ENCODE measurements at regions of chr3 and their contacts with region 1.

Region 1: DNA sequence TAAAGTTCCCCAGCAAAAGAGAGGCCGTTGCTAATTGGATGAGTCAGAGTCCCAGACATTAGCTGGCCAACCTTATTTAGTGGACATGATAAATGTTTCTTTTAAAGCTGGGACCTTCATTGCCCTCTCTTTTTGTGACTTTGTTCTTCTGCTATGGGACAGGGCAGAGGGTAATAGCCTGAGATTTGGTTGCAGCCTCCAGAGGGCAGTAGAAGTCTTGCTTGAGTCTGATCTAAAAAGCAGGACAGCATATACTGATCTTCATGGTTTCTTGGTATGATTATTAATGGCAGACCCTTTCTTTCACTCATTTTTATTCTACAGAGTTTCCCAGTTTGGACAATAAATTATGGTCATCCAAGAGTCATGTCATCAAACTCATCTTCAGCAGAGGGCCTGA is 25.1 kb upstream of the ZKSCAN7 start:
- DNase-seq: no peak
- H3K4me3 ChIP-seq: no peak overlapping the region
- H3K4me3 Mint-ChIP-seq: no peak overlapping the region
- H3K27ac ChIP-seq: no peak overlapping the region
- H3K27ac Mint-ChIP-seq: no peak overlapping the region
- H3K4me1 ChIP-seq: no peaks in the 10 kb centered on the region
- H3K4me1 Mint-ChIP-seq: no peaks in the 10 kb centered on the region
- H3K27me3 ChIP-seq: no peaks in the 10 kb centered on the region
- H3K27me3 Mint-ChIP-seq: peaks cover 18 to 33% of the 10 kb centered on the region in 2 donors

Region 2: DNA sequence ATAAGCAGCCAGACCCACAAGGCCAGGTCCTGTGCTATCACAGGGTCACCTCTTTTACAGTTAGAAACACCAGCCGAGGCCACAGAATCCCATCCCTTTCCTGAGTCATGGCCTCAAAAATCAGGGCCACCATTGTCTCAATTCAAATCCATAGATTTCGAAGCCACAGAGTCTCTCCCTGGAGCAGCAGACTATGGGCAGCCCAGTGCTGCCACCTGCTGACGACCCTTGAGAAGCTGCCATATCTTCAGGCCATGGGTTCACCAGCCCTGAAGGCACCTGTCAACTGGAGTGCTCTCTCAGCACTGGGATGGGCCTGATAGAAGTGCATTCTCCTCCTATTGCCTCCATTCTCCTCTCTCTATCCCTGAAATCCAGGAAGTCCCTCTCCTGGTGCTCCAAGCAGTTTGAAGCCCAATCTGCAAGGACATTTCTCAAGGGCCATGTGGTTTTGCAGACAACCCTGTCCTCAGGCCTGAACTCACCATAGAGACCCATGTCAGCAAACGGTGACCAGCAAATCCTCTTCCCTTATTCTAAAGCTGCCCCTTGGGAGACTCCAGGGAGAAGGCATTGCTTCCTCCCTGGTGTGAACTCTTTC is 384.0 kb after region 1 on chr3:
- CTCF ChIA-PET with region 1: interaction called, 55 read pairs
- POLR2A ChIA-PET with region 1: no interaction called
- DNase-seq: peak; percentile 44 to 69 (median 55)
- H3K4me3 ChIP-seq: no peak overlapping the region
- H3K4me3 Mint-ChIP-seq: no peak overlapping the region
- H3K27ac ChIP-seq: no peak overlapping the region
- H3K27ac Mint-ChIP-seq: no peak overlapping the region
- H3K4me1 ChIP-seq: no peaks in the 10 kb centered on the region
- H3K4me1 Mint-ChIP-seq: no peaks in the 10 kb centered on the region
- H3K27me3 ChIP-seq: no peaks in the 10 kb centered on the region
- H3K27me3 Mint-ChIP-seq: peaks cover 15 to 17% of the 10 kb centered on the region in 2 donors

Measured in CD8-positive, alpha-beta memory T cell (primary cell).